Left colon (tissue), 2 donors: ENCODE measurements at regions of chr1 and their contacts with region 1.

Region 1: DNA sequence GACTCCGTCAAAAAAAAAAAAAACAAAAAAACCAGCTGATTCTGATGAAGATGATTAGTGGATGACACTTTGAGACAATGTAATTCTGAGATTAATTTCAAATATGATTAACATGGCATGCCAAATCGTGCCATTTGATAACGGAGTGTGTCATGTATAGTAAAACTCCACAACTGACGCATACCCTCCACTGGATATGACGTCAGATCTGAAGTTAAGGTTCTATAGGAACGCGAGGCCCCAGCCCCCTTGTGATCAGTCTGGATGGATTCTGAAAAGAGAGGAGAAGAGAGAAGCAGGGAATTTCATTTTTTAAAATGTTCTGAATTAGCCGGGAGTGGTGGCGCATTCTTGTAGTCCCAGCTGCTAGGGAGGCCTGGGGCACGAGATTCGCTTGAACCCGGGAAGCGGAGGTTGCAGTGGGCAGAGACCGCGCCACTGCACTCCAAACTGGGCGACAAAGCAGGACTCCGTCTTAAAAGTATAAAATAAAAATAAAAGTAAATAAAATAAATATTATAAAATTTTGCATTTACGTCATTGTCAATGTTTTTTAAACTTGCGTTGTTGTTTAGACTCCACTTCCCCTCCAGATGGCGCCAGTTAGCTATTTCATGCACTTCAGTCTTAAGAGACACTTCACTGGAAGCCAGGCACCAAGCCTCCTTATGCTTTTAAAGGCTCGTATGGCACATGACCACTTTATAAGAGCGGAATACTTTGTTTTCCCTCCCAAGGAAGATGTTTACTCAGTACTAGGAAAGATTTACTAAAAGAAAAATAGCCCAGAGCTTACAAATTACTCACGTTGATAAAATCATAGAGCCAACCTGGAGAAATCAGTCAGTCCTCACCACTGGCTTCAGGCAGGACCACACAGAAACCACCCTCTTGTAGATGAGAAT is 65.5 kb downstream of the UBE2U start:
- DNase-seq: peak; percentile 46 to 71
- ATAC-seq: peak; percentile 89

Region 2: GRCh38 chr1:64051796-64052195 is 217.1 kb before region 1 on chr1:
- intact Hi-C with region 1: no loop called
- DNase-seq: no peak
- ATAC-seq: no peak

Region 3: GRCh38 chr1:64212031-64212430 is 56.9 kb before region 1 on chr1:
- intact Hi-C with region 1: no loop called
- DNase-seq: no peak
- ATAC-seq: no peak

Region 4: GRCh38 chr1:64231153-64231552 is 37.8 kb before region 1 on chr1:
- intact Hi-C with region 1: no loop called
- DNase-seq: no peak
- ATAC-seq: no peak

Region 5: GRCh38 chr1:64295561-64295960 is 26.7 kb after region 1 on chr1:
- intact Hi-C with region 1: no loop called
- DNase-seq: no peak
- ATAC-seq: no peak

Region 6: DNA sequence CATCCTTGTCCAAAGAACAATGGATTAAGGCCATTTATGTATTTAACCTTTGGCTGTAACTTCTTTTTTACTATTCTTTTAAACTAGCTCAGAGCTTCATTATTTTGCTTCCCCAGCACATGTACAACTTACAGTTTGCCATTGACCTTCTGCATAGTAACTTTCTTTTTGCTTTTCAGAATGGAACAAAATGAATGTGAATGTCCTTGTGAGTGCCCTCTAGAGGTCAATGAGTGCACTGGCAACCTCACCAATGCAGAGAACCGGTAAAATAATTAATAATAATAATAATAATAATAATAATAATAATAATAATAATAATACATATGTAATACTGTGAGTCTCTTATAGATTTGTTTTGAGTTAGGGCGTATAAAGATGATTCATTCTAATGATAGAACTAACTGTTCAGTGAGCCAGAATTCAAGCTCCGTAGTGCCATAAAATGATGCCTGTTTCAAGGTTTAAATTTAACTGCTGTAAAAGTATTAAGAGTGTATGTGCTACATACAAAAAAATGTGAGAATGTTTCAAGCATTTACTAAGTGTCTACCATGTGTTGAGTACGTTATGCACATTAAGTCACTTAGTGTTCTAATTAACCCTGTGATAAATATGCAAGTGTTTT is 406.9 kb after region 1 on chr1:
- intact Hi-C with region 1: loop called in 1 of 2 experiments (anchors 5 kb)
- DNase-seq: no peak
- ATAC-seq: peak; percentile 49